Naive thymus-derived CD4-positive, alpha-beta T cell (primary cell): ENCODE measurements at regions of chr11 and their contacts with region 1.

Region 1: GRCh38 chr11:78416305-78417178 is 1.1 kb downstream of the GAB2 start:
- DNase-seq: peak; percentile 37 to 83 (median 62)
- ATAC-seq: peak; percentile 69
- H3K4me3 ChIP-seq: peak overlapping the region; percentile 62
- H3K4me3 Mint-ChIP-seq: peak overlapping the region; percentile 83 to 97 (median 92)
- H3K27ac ChIP-seq: peak overlapping the region; percentile 17
- H3K27ac Mint-ChIP-seq: peak overlapping the region; percentile 12 to 97 (median 73)
- H3K4me1 ChIP-seq: peaks cover 8 to 17% of the 10 kb centered on the region in 2 donors
- H3K4me1 Mint-ChIP-seq: peaks cover 21 to 68% (median 26%) of the 10 kb centered on the region in 7 donors
- H3K27me3 ChIP-seq: no peaks in the 10 kb centered on the region
- H3K27me3 Mint-ChIP-seq: peaks cover 15 to 26% (median 19%) of the 10 kb centered on the region in 5 donors

Region 2: DNA sequence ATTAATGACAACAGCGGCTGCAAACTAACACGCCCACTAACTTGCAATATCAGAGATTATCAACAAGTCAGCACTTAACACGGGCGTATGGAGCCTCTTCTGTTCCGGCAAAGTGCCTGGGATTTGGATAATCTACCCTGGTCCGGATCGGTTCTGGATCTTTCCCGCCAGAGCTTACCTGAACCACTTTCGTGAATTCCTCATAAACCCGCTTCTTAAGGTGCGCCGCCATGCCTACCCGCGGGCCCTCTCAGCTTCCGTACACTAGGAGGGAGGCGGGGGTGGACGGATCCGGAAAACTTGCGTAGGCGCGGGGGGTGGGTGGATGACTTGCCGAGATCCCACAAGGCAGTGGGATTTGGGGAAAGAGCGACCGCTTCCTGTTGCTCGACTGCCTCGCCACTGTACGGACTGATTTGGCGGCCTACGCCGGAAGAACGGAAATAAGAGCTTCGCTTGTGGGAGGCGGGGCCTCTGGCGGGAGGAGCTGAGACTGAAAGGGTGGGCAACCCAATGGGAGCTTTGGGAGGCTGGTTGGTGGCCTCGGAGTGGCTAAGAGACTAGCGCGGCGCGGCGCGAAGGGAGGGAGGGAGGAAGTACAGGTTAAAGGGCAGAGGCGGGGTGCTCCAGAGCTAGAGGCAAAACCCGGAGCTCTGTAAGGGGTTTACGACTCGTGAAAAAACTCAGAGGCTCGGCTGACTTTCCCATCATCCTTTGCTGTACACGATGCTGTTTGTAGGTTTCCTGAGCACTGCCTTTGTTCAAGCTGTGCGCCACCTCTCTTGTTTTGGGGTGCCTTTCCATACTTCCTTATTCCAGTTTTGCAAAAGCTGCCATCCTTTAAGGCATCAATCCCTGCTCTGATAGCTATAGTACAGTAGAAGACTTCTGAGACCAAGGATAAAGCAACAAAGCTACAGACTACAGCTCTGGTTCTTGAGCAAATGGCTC is 421.9 kb before region 1 on chr11 and contains the start of gene INTS4:
- CTCF ChIA-PET with region 1: no interaction called
- POLR2A ChIA-PET with region 1: interaction called, 5 read pairs
- intact Hi-C with region 1: loop called (anchors 1 to 5 kb)
- DNase-seq: peak; percentile 88 to 99 (median 99)
- ATAC-seq: peak; percentile 98
- H3K4me3 ChIP-seq: peak within 1 kb of the TSS; percentile 88
- H3K4me3 Mint-ChIP-seq: peak within 1 kb of the TSS; percentile 87 to 96 (median 94)
- H3K27ac ChIP-seq: peak within 1 kb of the TSS; percentile 84
- H3K27ac Mint-ChIP-seq: peak within 1 kb of the TSS; percentile 86 to 99 (median 97)
- H3K4me1 ChIP-seq: peaks cover 16 to 18% of the 10 kb centered on the region in 2 donors
- H3K4me1 Mint-ChIP-seq: peaks cover 10 to 45% (median 28%) of the 10 kb centered on the region in 7 donors
- H3K27me3 ChIP-seq: no peaks in the 10 kb centered on the region
- H3K27me3 Mint-ChIP-seq: no peaks in the 10 kb centered on the region
- total RNA-seq, gene INTS4: 54.4 to 87.0 (median 65.0) TPM

Region 3: DNA sequence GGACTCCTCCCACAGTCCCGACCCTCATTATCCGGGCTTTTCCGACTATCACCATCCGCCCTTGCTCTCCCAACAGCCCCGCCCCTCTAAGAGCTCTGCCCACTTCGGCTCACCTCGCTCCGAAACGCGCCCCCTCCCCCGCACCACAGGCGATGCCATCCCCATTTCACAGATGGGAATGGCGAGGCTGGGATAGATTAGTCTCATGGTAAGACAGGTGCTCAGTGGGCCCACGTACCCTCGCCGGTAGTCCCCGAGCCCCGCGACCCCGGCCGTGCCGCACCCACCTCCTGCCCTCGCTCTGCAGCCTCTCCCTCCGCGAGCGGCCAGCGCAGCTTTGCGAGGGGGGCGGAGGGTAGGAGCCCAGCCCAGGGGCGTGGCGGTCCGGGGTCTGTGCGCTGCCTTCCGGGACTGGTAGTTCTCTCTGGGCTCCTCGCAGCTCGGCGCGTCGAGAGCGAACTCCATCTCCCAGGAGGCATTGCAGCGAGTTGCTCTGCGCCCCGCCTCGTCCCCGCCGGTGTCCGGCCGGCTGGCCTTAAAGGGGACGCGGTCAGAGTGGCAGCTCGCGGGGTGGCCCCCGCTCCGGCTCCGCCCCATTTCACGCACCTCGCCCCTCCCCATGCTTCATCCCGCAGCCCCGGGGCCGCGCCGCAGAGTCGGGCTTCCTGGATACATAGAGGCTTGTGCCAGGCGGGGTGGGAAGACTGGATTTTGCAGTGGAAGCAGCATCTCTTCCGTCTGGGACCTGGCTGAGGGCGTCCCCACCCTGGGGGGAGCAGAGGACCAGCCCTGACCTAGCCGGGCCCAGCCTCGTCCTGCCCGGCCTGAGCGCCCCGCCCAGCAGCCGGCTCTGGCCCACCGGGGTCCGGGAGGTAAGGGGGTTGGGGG is 228.0 kb before region 1 on chr11 and contains the starts of genes KCTD21 and USP35:
- CTCF ChIA-PET with region 1: no interaction called
- POLR2A ChIA-PET with region 1: interaction called, 3 read pairs
- intact Hi-C with region 1: loop called (anchors 1 kb)
- DNase-seq: peak; percentile 83 to 94 (median 87)
- ATAC-seq: peak; percentile 94
- H3K4me3 ChIP-seq: peak within 1 kb of the TSS; percentile 96
- H3K4me3 Mint-ChIP-seq: peak within 1 kb of the TSS; percentile 90 to 100 (median 98)
- H3K27ac ChIP-seq: peak within 1 kb of the TSS; percentile 85
- H3K27ac Mint-ChIP-seq: peak within 1 kb of the TSS; percentile 87 to 99 (median 97)
- H3K4me1 ChIP-seq: peaks cover 15 to 49% of the 10 kb centered on the region in 2 donors
- H3K4me1 Mint-ChIP-seq: peaks cover 37 to 59% (median 56%) of the 10 kb centered on the region in 7 donors
- H3K27me3 ChIP-seq: no peaks in the 10 kb centered on the region
- H3K27me3 Mint-ChIP-seq: no peaks in the 10 kb centered on the region
- total RNA-seq, gene KCTD21: 3.5 to 12.2 (median 6.5) TPM
- total RNA-seq, gene USP35: 11.3 to 19.2 (median 15.2) TPM

Region 4: GRCh38 chr11:78290293-78291176 is 126.0 kb before region 1 on chr11:
- CTCF ChIA-PET with region 1: no interaction called
- POLR2A ChIA-PET with region 1: no interaction called
- intact Hi-C with region 1: loop called in 1 of 2 experiments (anchors 2 kb)
- DNase-seq: peak in 2 of 9 donors; percentile 28 to 30
- ATAC-seq: peak; percentile 80
- H3K4me3 ChIP-seq: no peak overlapping the region
- H3K4me3 Mint-ChIP-seq: peak overlapping the region in 4 of 10 donors; percentile 2 to 68 (median 35)
- H3K27ac ChIP-seq: no peak overlapping the region
- H3K27ac Mint-ChIP-seq: peak overlapping the region in 4 of 9 donors; percentile 15 to 95 (median 32)
- H3K4me1 ChIP-seq: peaks cover 0 to 5% of the 10 kb centered on the region in 2 donors
- H3K4me1 Mint-ChIP-seq: peaks cover 18 to 58% (median 32%) of the 10 kb centered on the region in 7 donors
- H3K27me3 ChIP-seq: no peaks in the 10 kb centered on the region
- H3K27me3 Mint-ChIP-seq: no peaks in the 10 kb centered on the region

Region 5: DNA sequence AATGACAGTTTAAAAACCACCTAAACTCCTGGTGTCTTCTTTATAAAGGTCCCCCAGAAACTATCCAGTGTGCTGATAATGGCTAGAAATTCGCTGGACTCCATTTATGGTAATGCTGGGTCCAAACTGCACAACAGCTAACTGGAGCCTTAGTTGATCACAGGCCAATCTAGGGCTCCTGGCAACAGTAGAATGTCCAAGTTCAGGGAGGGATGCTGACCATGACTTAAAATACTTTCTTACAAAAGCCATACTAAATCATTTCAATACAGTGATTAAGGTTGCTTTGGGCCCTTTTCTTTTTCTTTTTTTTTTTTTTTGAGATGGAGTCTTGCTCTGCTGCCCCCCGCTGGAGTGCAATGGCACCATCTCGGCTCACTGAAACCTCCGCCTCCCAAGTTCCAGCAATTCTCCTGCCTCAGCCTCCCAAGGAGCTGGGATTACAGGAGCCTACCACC is 15.5 kb after region 1 on chr11:
- CTCF ChIA-PET with region 1: interaction called, 4 read pairs
- POLR2A ChIA-PET with region 1: interaction called, 3 read pairs
- intact Hi-C with region 1: loop called in 1 of 2 experiments (anchors 2 kb)
- DNase-seq: peak in 1 of 9 donors; percentile 23
- ATAC-seq: no peak
- H3K4me3 ChIP-seq: no peak overlapping the region
- H3K4me3 Mint-ChIP-seq: no peak overlapping the region
- H3K27ac ChIP-seq: no peak overlapping the region
- H3K27ac Mint-ChIP-seq: no peak overlapping the region
- H3K4me1 ChIP-seq: no peaks in the 10 kb centered on the region
- H3K4me1 Mint-ChIP-seq: peaks cover 0 to 28% (median 0%) of the 10 kb centered on the region in 7 donors
- H3K27me3 ChIP-seq: no peaks in the 10 kb centered on the region
- H3K27me3 Mint-ChIP-seq: no peaks in the 10 kb centered on the region

Region 6: GRCh38 chr11:78457448-78457847 is 40.9 kb after region 1 on chr11:
- CTCF ChIA-PET with region 1: no interaction called
- POLR2A ChIA-PET with region 1: no interaction called
- intact Hi-C with region 1: no loop called
- DNase-seq: no peak
- ATAC-seq: no peak
- H3K4me3 ChIP-seq: no peak overlapping the region
- H3K4me3 Mint-ChIP-seq: no peak overlapping the region
- H3K27ac ChIP-seq: no peak overlapping the region
- H3K27ac Mint-ChIP-seq: no peak overlapping the region
- H3K4me1 ChIP-seq: no peaks in the 10 kb centered on the region
- H3K4me1 Mint-ChIP-seq: peaks cover 0 to 33% (median 4%) of the 10 kb centered on the region in 7 donors
- H3K27me3 ChIP-seq: no peaks in the 10 kb centered on the region
- H3K27me3 Mint-ChIP-seq: no peaks in the 10 kb centered on the region

Region 7: GRCh38 chr11:78574386-78575381 is 158.1 kb after region 1 on chr11 and contains the start of gene NARS2:
- CTCF ChIA-PET with region 1: interaction called, 3 read pairs
- POLR2A ChIA-PET with region 1: no interaction called
- intact Hi-C with region 1: loop called (anchors 1 to 2 kb)
- DNase-seq: peak; percentile 89 to 97 (median 96)
- ATAC-seq: peak; percentile 99
- H3K4me3 ChIP-seq: peak within 1 kb of the TSS; percentile 70
- H3K4me3 Mint-ChIP-seq: peak within 1 kb of the TSS; percentile 93 to 100 (median 98)
- H3K27ac ChIP-seq: peak within 1 kb of the TSS; percentile 96
- H3K27ac Mint-ChIP-seq: peak within 1 kb of the TSS; percentile 86 to 99 (median 98)
- H3K4me1 ChIP-seq: peaks cover 7 to 21% of the 10 kb centered on the region in 2 donors
- H3K4me1 Mint-ChIP-seq: peaks cover 24 to 63% (median 50%) of the 10 kb centered on the region in 7 donors
- H3K27me3 ChIP-seq: no peaks in the 10 kb centered on the region
- H3K27me3 Mint-ChIP-seq: peaks cover 0 to 5% (median 0%) of the 10 kb centered on the region in 5 donors
- total RNA-seq, gene NARS2: 9.3 to 21.5 (median 19.7) TPM

Region 8: DNA sequence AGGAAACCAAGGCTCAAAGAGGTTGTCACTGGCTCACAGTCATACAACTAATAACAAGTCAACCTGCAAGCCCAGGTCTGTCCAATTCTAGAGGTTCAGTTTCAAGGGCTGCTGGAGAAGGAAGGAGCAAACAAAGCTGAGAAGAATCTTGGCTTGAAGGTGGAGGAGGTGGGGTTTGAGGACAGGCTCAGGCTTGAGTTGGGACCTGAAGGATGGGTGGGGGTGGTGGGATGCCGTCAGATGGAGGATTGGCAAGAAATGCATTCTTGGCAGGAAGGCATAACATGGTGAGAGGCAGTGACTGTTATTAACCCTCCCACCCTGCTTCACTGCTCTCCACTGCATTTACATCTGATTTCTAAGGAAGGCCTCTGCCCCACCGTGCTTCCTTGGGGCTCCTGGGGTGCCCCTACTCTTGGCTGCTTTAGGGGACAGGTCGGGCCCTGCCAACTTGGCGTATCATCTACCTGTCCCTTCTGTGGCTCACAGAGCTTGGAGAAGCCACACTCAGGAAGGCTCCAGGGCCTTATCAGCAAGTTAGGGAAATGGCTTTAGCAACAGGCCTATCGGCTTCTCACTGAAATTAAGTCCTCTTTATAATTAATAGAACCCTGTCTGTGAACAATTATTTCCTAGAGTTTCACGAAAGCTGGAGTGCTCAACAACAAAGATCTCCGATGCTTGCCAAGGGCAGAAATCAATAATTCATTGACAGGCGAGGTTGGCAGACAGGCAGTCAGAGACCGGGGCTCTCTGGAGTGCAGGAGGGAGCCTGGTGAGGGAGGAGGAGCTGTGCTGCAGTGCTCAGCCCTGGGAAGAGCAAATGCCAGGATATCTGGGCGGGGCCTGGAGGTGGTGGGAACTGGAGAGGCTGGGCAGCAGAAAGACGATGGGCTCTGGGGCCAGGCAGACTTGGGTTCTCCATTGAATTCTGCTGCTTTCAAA is 243.1 kb after region 1 on chr11:
- CTCF ChIA-PET with region 1: no interaction called
- POLR2A ChIA-PET with region 1: no interaction called
- intact Hi-C with region 1: no loop called
- DNase-seq: no peak
- ATAC-seq: no peak
- H3K4me3 ChIP-seq: no peak overlapping the region
- H3K4me3 Mint-ChIP-seq: no peak overlapping the region
- H3K27ac ChIP-seq: no peak overlapping the region
- H3K27ac Mint-ChIP-seq: no peak overlapping the region
- H3K4me1 ChIP-seq: no peaks in the 10 kb centered on the region
- H3K4me1 Mint-ChIP-seq: no peaks in the 10 kb centered on the region
- H3K27me3 ChIP-seq: no peaks in the 10 kb centered on the region
- H3K27me3 Mint-ChIP-seq: peaks cover 3 to 16% (median 9%) of the 10 kb centered on the region in 5 donors